ENCODE measurements at regions of chr13 and their contacts with region 1.

Region 1: DNA sequence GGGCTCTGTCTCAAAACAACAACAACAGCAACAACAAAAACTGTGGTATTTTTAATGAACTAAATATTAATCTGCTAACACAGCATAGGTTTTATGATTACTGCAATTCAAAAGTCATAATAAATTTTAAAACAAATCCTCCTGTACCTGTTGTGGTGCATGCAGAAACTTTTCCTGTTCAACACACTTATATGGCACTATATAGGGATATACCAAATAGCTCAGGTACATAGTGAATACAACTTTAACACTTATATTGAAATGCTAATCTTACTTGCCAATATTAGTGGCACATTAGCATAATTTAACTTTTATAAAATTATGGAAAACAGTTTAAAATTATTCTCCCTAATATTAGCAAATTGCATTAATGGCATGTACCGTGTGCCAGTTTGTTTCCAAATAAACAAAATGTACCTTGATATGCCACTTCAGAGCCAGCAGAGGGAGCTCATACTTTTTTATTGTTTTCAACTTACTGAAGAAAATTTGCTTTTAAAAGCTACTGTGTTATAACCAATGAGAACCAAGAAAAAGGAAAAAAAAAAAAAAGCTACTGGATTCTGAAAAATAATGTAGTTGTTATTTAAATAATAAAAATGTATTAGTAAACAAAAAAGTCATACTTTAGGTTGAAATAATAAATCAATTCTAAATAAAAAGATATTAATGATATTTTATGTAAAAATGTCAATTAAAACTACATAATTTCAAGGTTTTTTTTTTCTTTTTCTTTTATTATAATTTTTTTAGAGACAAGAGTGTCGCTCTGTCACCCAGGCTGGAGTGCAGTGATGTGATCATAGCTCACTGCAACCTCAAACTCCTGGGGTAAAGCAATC is 18.0 kb upstream of the RBM26 start:
- DNase-seq: peak; percentile 25
- CTCF ChIP-seq: peak; percentile 62

Region 2: GRCh38 chr13:79413521-79413920 is 10.5 kb before region 1 on chr13:
- CTCF ChIA-PET with region 1: interaction called, 27 read pairs
- POLR2A ChIA-PET with region 1: interaction called, 3 read pairs
- DNase-seq: no peak
- CTCF ChIP-seq: no peak

Region 3: GRCh38 chr13:79440958-79441528 is 17.0 kb after region 1 on chr13:
- CTCF ChIA-PET with region 1: interaction called, 14 read pairs
- POLR2A ChIA-PET with region 1: no interaction called
- DNase-seq: no peak
- CTCF ChIP-seq: no peak

Region 4: GRCh38 chr13:79457948-79458347 is 33.9 kb after region 1 on chr13:
- CTCF ChIA-PET with region 1: interaction called, 13 read pairs
- POLR2A ChIA-PET with region 1: no interaction called
- DNase-seq: no peak
- CTCF ChIP-seq: no peak

Region 5: DNA sequence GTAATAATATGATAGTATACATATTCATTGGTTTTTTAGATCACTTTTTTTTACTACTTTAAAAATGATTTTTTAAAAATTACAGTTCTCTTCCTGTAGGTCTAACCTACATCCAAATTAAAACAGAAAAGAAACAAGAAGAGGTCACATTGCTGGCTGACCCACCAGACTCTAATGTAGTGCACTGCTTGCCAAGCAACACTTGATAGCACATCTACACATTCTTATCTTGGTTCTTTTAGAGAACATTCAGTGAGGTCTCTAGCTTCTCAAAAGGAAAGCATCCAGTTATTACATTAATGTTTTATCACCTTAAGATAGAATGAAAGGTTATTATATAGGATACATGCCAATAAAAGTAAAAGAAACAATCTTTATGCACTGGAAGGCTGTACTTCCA is 92.6 kb after region 1 on chr13:
- CTCF ChIA-PET with region 1: interaction called, 16 read pairs
- POLR2A ChIA-PET with region 1: no interaction called
- DNase-seq: no peak
- CTCF ChIP-seq: no peak

Region 6: GRCh38 chr13:79533781-79534400 is 109.9 kb after region 1 on chr13:
- CTCF ChIA-PET with region 1: interaction called, 152 read pairs
- POLR2A ChIA-PET with region 1: no interaction called
- DNase-seq: no peak
- CTCF ChIP-seq: no peak

Region 7: GRCh38 chr13:79547211-79548195 is 123.5 kb after region 1 on chr13:
- CTCF ChIA-PET with region 1: interaction called, 103 read pairs
- POLR2A ChIA-PET with region 1: no interaction called
- DNase-seq: no peak
- CTCF ChIP-seq: no peak